CD4-positive, alpha-beta T cell (primary cell): ENCODE measurements at regions of chr17 and their contacts with region 1.

Region 1: DNA sequence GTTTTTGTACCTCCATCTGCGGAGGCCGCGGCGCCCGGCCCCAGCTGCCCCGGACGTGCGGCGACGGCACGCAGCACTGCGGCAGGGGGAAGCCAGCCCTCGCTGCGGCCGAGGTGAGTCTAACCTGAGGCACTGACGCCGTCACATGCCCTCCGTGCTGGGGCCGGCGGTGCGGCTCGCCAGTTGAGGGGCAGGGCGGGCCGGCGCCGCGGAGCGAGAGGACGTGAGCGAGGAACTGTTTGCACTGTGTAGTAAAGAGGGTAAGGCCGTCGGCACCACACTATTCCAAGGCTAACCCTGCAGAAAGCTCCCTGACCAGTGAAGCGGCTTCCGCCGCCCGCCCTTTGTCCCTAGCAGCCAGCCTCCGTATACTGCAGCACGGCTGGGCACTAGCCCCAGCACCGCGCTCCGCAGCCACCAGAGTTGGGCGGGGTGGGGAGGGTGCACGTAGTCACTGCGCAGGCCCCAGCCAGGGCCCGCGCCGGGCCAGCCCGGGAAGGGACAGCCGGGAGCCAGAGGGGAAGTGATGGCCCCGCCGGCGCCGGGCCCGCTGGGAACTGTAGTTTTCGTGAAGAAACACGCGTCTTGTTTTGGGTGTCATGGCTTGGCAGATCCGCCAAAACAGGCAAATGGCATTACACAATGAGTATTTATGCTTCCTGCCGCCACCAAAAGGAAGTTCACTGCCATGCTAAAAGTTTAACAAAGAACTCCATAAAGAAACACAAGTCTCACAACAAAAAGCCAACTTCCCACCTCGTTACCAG is 580 bp upstream of the KANSL1 start:
- DNase-seq: peak; percentile 84 to 98 (median 94)
- ATAC-seq: peak; percentile 62
- H3K4me3 ChIP-seq: peak overlapping the region; percentile 90
- H3K4me3 Mint-ChIP-seq: peak overlapping the region; percentile 82
- H3K27ac ChIP-seq: peak overlapping the region; percentile 95 to 98
- H3K27ac Mint-ChIP-seq: peak overlapping the region; percentile 93
- H3K4me1 ChIP-seq: peaks cover 40% of the 10 kb centered on the region
- H3K4me1 Mint-ChIP-seq: peaks cover 71% of the 10 kb centered on the region
- H3K27me3 ChIP-seq: no peaks in the 10 kb centered on the region
- H3K27me3 Mint-ChIP-seq: no peaks in the 10 kb centered on the region
- CTCF ChIP-seq: no peak

Region 2: GRCh38 chr17:45688353-45688752 is 505.5 kb before region 1 on chr17:
- CTCF ChIA-PET with region 1: no interaction called
- POLR2A ChIA-PET with region 1: no interaction called
- intact Hi-C with region 1: no loop called
- DNase-seq: no peak
- ATAC-seq: no peak
- H3K4me3 ChIP-seq: no peak overlapping the region
- H3K4me3 Mint-ChIP-seq: no peak overlapping the region
- H3K27ac ChIP-seq: no peak overlapping the region
- H3K27ac Mint-ChIP-seq: no peak overlapping the region
- H3K4me1 ChIP-seq: no peaks in the 10 kb centered on the region
- H3K4me1 Mint-ChIP-seq: no peaks in the 10 kb centered on the region
- H3K27me3 ChIP-seq: peaks cover 11 to 24% of the 10 kb centered on the region in 2 experiments
- H3K27me3 Mint-ChIP-seq: peaks cover 38% of the 10 kb centered on the region
- CTCF ChIP-seq: no peak

Region 3: GRCh38 chr17:46002311-46002972 is 191.4 kb before region 1 on chr17:
- CTCF ChIA-PET with region 1: interaction called, 4 read pairs
- POLR2A ChIA-PET with region 1: interaction called, 4 read pairs
- intact Hi-C with region 1: loop called in 1 of 2 experiments (anchors 5 kb)
- DNase-seq: peak; percentile 53 to 84 (median 72)
- ATAC-seq: peak; percentile 96
- H3K4me3 ChIP-seq: no peak overlapping the region
- H3K4me3 Mint-ChIP-seq: no peak overlapping the region
- H3K27ac ChIP-seq: no peak overlapping the region
- H3K27ac Mint-ChIP-seq: no peak overlapping the region
- H3K4me1 ChIP-seq: peaks cover 7% of the 10 kb centered on the region
- H3K4me1 Mint-ChIP-seq: no peaks in the 10 kb centered on the region
- H3K27me3 ChIP-seq: no peaks in the 10 kb centered on the region
- H3K27me3 Mint-ChIP-seq: peaks cover 5% of the 10 kb centered on the region
- CTCF ChIP-seq: peak; percentile 84

Region 4: GRCh38 chr17:46061435-46061834 is 132.4 kb before region 1 on chr17:
- CTCF ChIA-PET with region 1: interaction called, 14 read pairs
- POLR2A ChIA-PET with region 1: interaction called, 18 read pairs
- intact Hi-C with region 1: loop called in 1 of 2 experiments (anchors 5 kb)
- DNase-seq: peak in 1 of 14 experiments; percentile 22
- ATAC-seq: peak; percentile 46
- H3K4me3 ChIP-seq: no peak overlapping the region
- H3K4me3 Mint-ChIP-seq: no peak overlapping the region
- H3K27ac ChIP-seq: no peak overlapping the region
- H3K27ac Mint-ChIP-seq: peak overlapping the region; percentile 17
- H3K4me1 ChIP-seq: no peaks in the 10 kb centered on the region
- H3K4me1 Mint-ChIP-seq: peaks cover 49% of the 10 kb centered on the region
- H3K27me3 ChIP-seq: no peaks in the 10 kb centered on the region
- H3K27me3 Mint-ChIP-seq: no peaks in the 10 kb centered on the region
- CTCF ChIP-seq: peak; percentile 38

Region 5: GRCh38 chr17:46121841-46122485 is 71.8 kb before region 1 on chr17:
- CTCF ChIA-PET with region 1: interaction called, 20 read pairs
- POLR2A ChIA-PET with region 1: interaction called, 7 read pairs
- intact Hi-C with region 1: no loop called
- DNase-seq: no peak
- ATAC-seq: peak; percentile 27
- H3K4me3 ChIP-seq: no peak overlapping the region
- H3K4me3 Mint-ChIP-seq: peak overlapping the region; percentile 26
- H3K27ac ChIP-seq: no peak overlapping the region
- H3K27ac Mint-ChIP-seq: peak overlapping the region; percentile 78
- H3K4me1 ChIP-seq: peaks cover 42% of the 10 kb centered on the region
- H3K4me1 Mint-ChIP-seq: peaks cover 91% of the 10 kb centered on the region
- H3K27me3 ChIP-seq: no peaks in the 10 kb centered on the region
- H3K27me3 Mint-ChIP-seq: no peaks in the 10 kb centered on the region
- CTCF ChIP-seq: no peak

Region 6: DNA sequence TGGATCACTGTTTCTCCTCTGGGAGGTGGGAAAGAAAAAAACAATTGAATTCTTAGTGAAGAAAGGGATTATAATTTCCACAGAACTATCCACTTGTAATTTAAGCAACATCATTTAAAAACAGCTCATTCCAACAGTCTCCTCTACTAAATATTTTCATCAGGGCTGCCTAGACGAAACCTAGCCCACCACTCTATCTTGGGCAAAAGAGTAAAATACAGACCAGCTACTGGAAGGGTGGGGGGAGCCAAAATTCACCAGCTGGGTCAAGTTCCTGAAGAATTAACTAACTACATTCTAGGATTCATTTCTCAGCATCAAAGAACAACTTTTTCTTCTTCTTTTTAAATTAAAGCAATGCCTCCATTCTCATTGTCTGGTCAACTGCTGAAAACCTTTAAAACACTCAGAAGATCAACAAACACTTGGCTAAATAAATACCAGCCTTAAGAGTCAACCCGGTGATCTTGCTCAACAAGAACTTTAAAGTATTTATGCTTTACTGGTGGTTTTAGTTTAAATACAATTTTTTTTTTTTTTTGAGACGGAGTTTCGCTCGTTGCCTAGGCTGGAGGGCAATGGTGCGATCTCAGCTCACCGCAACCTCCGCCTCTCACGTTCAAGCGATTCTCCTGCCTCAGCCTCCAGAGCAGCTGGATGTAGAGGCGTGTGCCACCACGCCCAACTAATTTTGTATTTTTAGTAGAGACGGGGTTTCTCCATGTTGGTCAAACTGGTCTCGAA is 25.8 kb before region 1 on chr17:
- CTCF ChIA-PET with region 1: interaction called, 25 read pairs
- POLR2A ChIA-PET with region 1: interaction called, 18 read pairs
- intact Hi-C with region 1: no loop called
- DNase-seq: no peak
- ATAC-seq: no peak
- H3K4me3 ChIP-seq: no peak overlapping the region
- H3K4me3 Mint-ChIP-seq: peak overlapping the region; percentile 52
- H3K27ac ChIP-seq: no peak overlapping the region
- H3K27ac Mint-ChIP-seq: peak overlapping the region; percentile 46
- H3K4me1 ChIP-seq: peaks cover 46% of the 10 kb centered on the region
- H3K4me1 Mint-ChIP-seq: peaks cover 86% of the 10 kb centered on the region
- H3K27me3 ChIP-seq: no peaks in the 10 kb centered on the region
- H3K27me3 Mint-ChIP-seq: no peaks in the 10 kb centered on the region
- CTCF ChIP-seq: no peak

Region 7: DNA sequence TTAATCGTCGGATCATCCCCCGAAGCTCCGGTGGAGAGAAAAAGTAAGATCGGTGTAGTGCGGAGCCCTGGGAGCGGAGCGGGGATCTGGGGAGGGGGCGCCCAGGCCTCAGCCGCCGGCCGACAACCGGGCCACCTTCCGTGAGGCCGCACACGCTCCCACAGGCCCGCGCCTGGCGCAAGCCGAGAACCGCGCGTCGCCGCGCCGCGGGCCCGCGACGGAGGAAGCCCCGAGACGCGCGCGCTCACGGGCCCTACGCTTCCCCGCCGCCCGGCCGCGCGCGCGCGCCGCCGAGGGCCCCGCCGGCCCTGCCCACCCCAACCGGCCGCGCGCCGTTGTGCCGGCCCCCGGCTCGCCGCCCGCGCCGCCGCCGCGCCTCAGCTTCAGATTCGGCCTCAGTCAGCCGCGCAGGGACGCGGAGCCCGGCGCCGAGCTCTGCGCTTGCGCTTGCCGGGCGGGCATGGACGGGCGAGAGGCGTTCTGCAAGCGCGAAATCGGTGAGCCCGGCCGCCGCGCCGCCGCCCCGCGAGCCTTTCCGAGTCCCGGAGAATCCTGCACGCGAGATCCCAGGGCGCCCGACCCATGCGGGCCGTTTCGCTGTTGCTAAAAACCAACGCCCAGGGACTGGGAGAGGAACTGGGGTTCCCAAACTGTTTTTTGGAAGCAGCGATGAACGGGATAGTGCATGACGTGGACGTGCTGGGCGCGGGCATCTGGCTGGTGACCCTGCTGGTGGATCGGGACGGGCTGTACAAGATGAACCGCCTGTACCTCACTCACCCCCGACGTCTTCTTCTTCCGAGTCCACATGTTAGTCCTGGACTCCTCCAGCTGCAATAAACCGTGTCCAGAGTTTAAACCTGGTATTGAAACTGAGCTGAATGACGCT is 73.1 kb after region 1 on chr17:
- CTCF ChIA-PET with region 1: interaction called, 8 read pairs
- POLR2A ChIA-PET with region 1: interaction called, 9 read pairs
- intact Hi-C with region 1: loop called (anchors 5 to 10 kb)
- DNase-seq: peak; percentile 55 to 96 (median 82)
- ATAC-seq: peak; percentile 43
- H3K4me3 ChIP-seq: peak overlapping the region; percentile 84
- H3K4me3 Mint-ChIP-seq: peak overlapping the region; percentile 89
- H3K27ac ChIP-seq: peak overlapping the region; percentile 70 to 72
- H3K27ac Mint-ChIP-seq: peak overlapping the region; percentile 97
- H3K4me1 ChIP-seq: peaks cover 35% of the 10 kb centered on the region
- H3K4me1 Mint-ChIP-seq: peaks cover 31% of the 10 kb centered on the region
- H3K27me3 ChIP-seq: no peaks in the 10 kb centered on the region
- H3K27me3 Mint-ChIP-seq: no peaks in the 10 kb centered on the region
- CTCF ChIP-seq: no peak